ENCODE measurements at regions of chr6 and their contacts with region 1.

Region 1: GRCh38 chr6:79233611-79234149 is 802 bp downstream of the HMGN3 start:
- DNase-seq: peak; percentile 84
- ATAC-seq: peak; percentile 95
- H3K4me3 ChIP-seq: peak overlapping the region; percentile 61 to 79 (median 77)
- H3K27ac ChIP-seq: peak overlapping the region; percentile 84
- H3K4me1 ChIP-seq: peaks cover 21% of the 10 kb centered on the region
- H3K27me3 ChIP-seq: no peaks in the 10 kb centered on the region
- CTCF ChIP-seq: peak; percentile 29; the same call in 1 of the 2 replicates
- EP300 ChIP-seq: 0 out of 4 replicates have a peak, but pooled peaks of 1 of the 2 experiments have one; percentile 4
- POLR2A ChIP-seq: peak; percentile 59 to 64; a peak in 3 of 4 replicates
- RAD21 ChIP-seq: peak; percentile 52; the same call in 1 of the 2 replicates

Region 2: GRCh38 chr6:78867370-78868040 is 366.2 kb before region 1 on chr6 and contains the start of gene IRAK1BP1:
- CTCF ChIA-PET with region 1: no interaction called
- POLR2A ChIA-PET with region 1: no interaction called
- in situ Hi-C with region 1: no loop called
- intact Hi-C with region 1: loop called (anchors 5 kb)
- DNase-seq: peak; percentile 75
- ATAC-seq: peak; percentile 99
- H3K4me3 ChIP-seq: peak within 1 kb of the TSS; percentile 80 to 88 (median 87)
- H3K27ac ChIP-seq: peak within 1 kb of the TSS; percentile 64
- H3K4me1 ChIP-seq: peaks cover 12% of the 10 kb centered on the region
- H3K27me3 ChIP-seq: no peaks in the 10 kb centered on the region
- CTCF ChIP-seq: peak; percentile 38; the same call in 1 of the 2 replicates
- EP300 ChIP-seq: no peak
- POLR2A ChIP-seq: peak; percentile 50 to 65
- RAD21 ChIP-seq: peak; percentile 33; the same call in 1 of the 2 replicates
- total RNA-seq, gene IRAK1BP1: 1.5 and 1.9 TPM in 2 replicates

Region 3: DNA sequence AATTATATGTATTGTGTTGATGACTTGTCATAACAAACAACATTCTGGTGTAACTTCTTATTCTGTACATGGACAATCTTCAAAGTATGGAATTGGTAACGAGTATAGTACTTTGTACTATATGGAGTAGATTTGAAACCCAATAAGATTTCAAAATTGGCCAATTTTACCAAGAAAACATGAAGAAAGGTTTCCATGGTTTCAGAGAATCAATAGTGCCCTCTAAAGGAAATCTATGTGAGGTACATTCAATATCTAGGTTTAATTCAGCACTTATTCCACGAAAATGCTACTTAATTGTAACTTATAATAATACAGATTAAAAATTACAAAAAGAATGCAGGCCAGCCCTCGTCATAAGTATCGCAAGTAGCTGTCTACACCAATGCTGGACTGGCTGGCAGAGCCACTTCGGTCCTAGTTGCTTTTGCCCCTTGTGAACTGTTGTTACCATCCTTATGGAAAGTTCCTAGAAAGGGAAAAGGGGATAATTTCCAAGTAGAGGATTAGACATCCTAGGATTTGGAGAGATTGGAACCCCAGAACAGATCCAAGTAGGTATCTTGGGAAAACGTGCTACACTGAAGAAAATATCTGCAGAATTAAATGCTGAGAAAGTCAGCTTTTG is 232.6 kb after region 1 on chr6:
- CTCF ChIA-PET with region 1: no interaction called
- POLR2A ChIA-PET with region 1: no interaction called
- in situ Hi-C with region 1: no loop called
- intact Hi-C with region 1: loop called (anchors 10 kb)
- DNase-seq: no peak
- ATAC-seq: no peak
- H3K4me3 ChIP-seq: no peak overlapping the region
- H3K27ac ChIP-seq: no peak overlapping the region
- H3K4me1 ChIP-seq: peaks cover 76% of the 10 kb centered on the region
- H3K27me3 ChIP-seq: no peaks in the 10 kb centered on the region
- CTCF ChIP-seq: peak; percentile 51
- EP300 ChIP-seq: no peak
- POLR2A ChIP-seq: no peak
- RAD21 ChIP-seq: no peak

Region 4: DNA sequence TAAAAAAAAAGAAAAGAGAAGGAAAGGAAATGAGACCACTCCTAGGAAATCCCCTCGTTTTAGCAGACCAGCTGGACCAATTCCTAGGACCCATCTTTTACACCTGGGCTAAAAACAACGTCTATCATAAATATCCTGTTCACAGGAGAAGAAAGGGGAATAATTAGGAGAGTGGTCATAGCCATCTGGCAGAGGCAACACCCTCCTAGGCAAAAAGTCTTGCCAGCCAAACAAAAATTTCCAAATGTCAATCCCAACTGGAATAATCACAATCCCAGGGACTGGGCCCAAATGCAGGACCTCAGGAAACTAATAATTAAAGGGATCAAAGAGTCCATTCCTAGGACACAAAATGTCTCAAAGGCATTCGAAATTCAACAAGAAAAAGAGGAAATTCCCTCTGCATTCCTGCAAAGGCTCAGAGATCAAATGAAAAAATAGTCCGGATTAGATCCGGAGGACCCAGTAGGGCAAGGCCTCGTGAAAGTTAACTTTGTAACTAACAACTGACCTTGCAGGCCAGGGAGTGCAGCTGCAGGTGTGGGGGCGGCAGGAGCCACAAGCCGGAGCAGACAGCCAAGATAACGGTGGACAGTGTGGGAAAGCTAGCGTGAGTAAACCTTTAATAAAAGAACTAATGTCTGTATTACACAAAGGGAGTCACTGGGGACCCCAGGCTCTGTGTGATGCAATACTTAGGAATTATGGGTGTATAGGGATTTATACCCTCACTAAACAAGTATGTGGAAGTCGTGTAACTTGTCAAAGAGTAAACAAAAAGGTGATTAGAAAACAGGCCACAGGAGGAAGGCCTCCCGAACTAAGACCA is 291.8 kb after region 1 on chr6:
- CTCF ChIA-PET with region 1: no interaction called
- POLR2A ChIA-PET with region 1: no interaction called
- in situ Hi-C with region 1: no loop called
- intact Hi-C with region 1: loop called (anchors 10 kb)
- DNase-seq: peak; percentile 91
- ATAC-seq: peak; percentile 100
- H3K4me3 ChIP-seq: peak overlapping the region; percentile 45 to 52 (median 50)
- H3K27ac ChIP-seq: peak overlapping the region; percentile 85
- H3K4me1 ChIP-seq: peaks cover 44% of the 10 kb centered on the region
- H3K27me3 ChIP-seq: no peaks in the 10 kb centered on the region
- CTCF ChIP-seq: no peak
- EP300 ChIP-seq: peak in 1 of 2 experiments; percentile 65; a peak in 1 of 4 replicates
- POLR2A ChIP-seq: 0 out of 4 replicates have a peak, but pooled peaks of 1 of the 2 experiments have one; percentile 28
- RAD21 ChIP-seq: 0 out of 2 replicates have a peak, but pooled peaks have one; percentile 20

Region 5: DNA sequence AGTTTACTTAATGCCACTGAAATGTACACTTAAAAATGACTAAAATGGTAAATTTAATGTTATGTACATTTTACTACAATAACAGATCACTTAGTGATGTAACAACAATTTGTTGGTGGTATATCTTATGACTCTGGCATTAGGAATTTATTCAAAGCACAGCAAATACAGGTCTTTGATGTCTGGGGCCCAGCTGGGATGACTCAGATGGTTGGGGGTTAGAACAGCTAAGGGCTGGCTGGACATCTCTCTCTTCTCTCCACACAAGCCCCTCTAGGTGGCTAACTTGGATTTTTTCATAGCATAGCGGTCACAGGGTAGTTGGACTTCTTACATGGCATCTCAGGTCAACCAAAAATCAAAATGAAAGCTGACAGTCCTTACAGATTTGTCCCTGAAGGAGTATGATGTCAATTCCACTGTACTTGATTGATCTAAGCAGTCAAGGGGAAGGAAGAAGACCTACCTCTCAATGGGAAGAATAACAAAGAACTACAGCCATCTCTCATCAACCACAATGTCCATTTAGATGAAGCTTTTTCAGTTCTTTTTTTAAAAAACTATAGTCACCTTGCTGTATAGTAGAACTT is 341.1 kb after region 1 on chr6:
- CTCF ChIA-PET with region 1: no interaction called
- POLR2A ChIA-PET with region 1: no interaction called
- in situ Hi-C with region 1: no loop called
- intact Hi-C with region 1: no loop called
- DNase-seq: peak; percentile 84
- ATAC-seq: peak; percentile 90
- H3K4me3 ChIP-seq: no peak overlapping the region
- H3K27ac ChIP-seq: no peak overlapping the region
- H3K4me1 ChIP-seq: peaks cover 50% of the 10 kb centered on the region
- H3K27me3 ChIP-seq: no peaks in the 10 kb centered on the region
- CTCF ChIP-seq: no peak
- EP300 ChIP-seq: peak in 1 of 2 experiments; percentile 77; a peak in 2 of 4 replicates
- POLR2A ChIP-seq: no peak
- RAD21 ChIP-seq: no peak

Region 6: GRCh38 chr6:79617518-79617941 is 383.9 kb after region 1 on chr6:
- CTCF ChIA-PET with region 1: no interaction called
- POLR2A ChIA-PET with region 1: no interaction called
- in situ Hi-C with region 1: no loop called
- intact Hi-C with region 1: loop called (anchors 5 kb)
- DNase-seq: peak; percentile 91
- ATAC-seq: peak; percentile 78
- H3K4me3 ChIP-seq: 0 out of 6 replicates have a peak overlapping the region, but pooled peaks of 1 of the 3 experiments have one; percentile 0
- H3K27ac ChIP-seq: peak overlapping the region; percentile 86
- H3K4me1 ChIP-seq: peaks cover 100% of the 10 kb centered on the region
- H3K27me3 ChIP-seq: no peaks in the 10 kb centered on the region
- CTCF ChIP-seq: no peak
- EP300 ChIP-seq: peak in 1 of 2 experiments; percentile 91; a peak in 2 of 4 replicates
- POLR2A ChIP-seq: no peak
- RAD21 ChIP-seq: no peak